ENCODE measurements at regions of chr12 and their contacts with region 1.

Region 1: DNA sequence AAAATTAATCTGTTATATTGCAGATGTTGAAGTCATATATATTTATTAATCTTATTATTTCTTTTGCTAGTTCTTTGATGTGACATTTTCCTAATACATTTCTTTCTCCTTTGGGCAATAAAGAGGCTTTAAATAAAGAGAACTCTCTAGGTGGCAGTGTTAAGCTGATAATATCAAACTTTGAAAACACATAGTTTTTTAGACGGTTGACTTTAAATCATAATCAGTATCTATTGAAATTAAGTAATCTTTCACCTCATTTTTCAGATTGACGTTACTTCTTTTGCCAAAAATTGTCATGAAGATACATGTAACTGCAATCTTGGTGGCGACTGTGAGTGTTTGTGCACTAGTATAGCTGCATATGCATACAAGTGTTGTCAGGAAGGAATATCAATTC is 130.8 kb upstream of the PTPRQ start:
- DNase-seq: peak; percentile 34
- H3K4me3 ChIP-seq: no peak overlapping the region
- H3K27ac ChIP-seq: no peak overlapping the region
- H3K4me1 ChIP-seq: no peaks in the 10 kb centered on the region
- H3K27me3 ChIP-seq: no peaks in the 10 kb centered on the region
- CTCF ChIP-seq: no peak
- POLR2A ChIP-seq: no peak

Region 2: DNA sequence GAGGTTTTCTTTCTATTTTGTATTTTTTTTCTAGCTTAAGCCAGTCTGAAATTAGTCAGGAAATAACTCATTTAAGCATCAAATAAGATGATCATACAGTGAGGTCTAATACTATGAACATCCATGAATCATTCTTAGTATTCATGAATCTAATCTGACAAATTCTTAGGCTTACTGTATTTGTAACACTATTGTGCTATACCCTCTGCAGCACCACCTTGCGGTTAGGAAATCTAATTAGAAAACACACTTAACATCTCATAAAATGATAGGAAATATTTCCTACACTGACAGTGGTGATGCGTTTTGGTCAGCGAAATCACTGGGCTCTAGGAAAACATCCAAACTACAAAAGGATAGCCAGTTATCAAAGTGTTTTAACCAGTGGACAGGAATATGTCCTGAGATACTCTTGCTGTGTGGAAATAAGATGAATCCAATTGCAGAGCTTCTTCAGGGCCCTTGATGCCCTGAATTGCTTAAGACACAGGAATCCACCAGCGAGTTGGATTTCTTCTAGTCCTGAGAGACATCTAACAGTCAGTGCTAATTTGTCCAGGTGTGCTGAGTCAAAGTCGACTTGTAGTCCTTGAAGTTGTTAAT is 284.9 kb after region 1 on chr12:
- CTCF ChIA-PET with region 1: interaction called, 14 read pairs
- POLR2A ChIA-PET with region 1: no interaction called
- dilution Hi-C with region 1: no loop called
- intact Hi-C with region 1: no loop called
- DNase-seq: peak; percentile 55
- H3K4me3 ChIP-seq: no peak overlapping the region
- H3K27ac ChIP-seq: no peak overlapping the region
- H3K4me1 ChIP-seq: no peaks in the 10 kb centered on the region
- H3K27me3 ChIP-seq: no peaks in the 10 kb centered on the region
- CTCF ChIP-seq: peak in 1 of 2 donors; percentile 23
- POLR2A ChIP-seq: no peak

Region 3: DNA sequence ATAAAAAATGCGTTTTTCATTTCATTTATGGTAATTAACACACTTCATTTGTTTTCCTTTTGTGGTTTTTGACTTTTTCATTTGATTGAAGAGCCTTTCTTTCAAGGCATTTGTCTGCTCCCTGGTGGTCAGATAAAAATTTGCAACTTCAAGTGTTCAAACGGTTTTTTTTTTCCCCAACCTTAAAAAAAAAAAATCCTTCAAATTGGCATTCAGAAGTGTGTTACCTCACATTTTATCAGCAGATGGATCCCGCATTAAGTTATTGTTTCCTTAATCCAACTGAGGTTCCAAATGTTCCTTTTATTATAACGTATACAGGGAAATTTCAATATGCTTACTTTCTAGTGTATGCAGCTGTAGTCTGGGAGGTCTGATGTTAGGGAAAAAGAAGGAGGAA is 450.7 kb after region 1 on chr12:
- CTCF ChIA-PET with region 1: interaction called, 17 read pairs
- POLR2A ChIA-PET with region 1: no interaction called
- dilution Hi-C with region 1: no loop called
- intact Hi-C with region 1: no loop called
- DNase-seq: peak; percentile 73
- H3K4me3 ChIP-seq: no peak overlapping the region
- H3K27ac ChIP-seq: no peak overlapping the region
- H3K4me1 ChIP-seq: no peaks in the 10 kb centered on the region
- H3K27me3 ChIP-seq: no peaks in the 10 kb centered on the region
- CTCF ChIP-seq: peak; percentile 28 to 38
- POLR2A ChIP-seq: no peak